ENCODE measurements at regions of chr1 and their contacts with region 1.

Region 1: DNA sequence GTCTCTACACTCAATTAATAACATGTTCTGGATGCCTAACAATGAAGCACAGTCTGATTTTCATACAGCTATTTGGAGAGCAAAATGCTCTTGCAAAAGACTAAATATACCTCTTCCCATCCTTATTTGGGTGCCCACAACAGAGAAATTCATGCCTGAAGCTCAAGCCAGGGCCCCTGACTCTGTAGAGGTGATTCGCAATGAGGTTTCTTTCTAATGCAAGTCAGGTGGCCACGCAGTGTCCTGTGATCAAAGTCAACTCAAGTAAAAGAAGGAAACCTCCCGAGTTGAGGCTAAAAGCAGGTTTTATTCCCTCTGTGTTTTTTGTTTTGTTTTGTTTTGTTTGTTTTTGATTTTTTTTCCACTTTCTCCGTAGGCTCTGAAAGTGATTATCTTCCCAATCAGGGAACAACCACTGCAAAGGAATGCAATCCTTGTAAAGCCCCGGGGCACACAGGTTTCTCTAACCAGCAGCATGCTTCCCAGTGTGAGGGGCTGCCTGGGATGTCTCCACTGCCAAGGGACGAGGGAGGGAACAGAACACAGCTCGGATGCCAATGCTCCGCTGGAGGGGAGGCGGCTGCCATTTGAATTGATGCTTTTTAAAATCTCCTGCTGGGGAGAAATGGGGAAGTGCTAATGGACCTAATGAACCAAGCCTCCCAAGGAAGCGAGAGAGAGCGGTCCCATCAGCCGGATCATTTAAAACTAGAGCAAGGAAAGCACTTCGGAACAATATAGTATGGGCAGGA is 73.8 kb upstream of the SSX2IP start:
- DNase-seq: no peak
- H3K4me3 ChIP-seq: no peak overlapping the region
- H3K27ac ChIP-seq: no peak overlapping the region
- H3K4me1 ChIP-seq: no peaks in the 10 kb centered on the region
- H3K27me3 ChIP-seq: peaks cover 29 to 30% of the 10 kb centered on the region in 2 experiments
- CTCF ChIP-seq: no peak
- POLR2A ChIP-seq: no peak

Region 2: GRCh38 chr1:84753516-84754385 is 10.3 kb before region 1 on chr1:
- CTCF ChIA-PET with region 1: interaction called, 10 read pairs
- POLR2A ChIA-PET with region 1: no interaction called
- dilution Hi-C with region 1: no loop called
- intact Hi-C with region 1: no loop called
- DNase-seq: peak; percentile 71
- H3K4me3 ChIP-seq: no peak overlapping the region
- H3K27ac ChIP-seq: no peak overlapping the region
- H3K4me1 ChIP-seq: no peaks in the 10 kb centered on the region
- H3K27me3 ChIP-seq: peaks cover 8 to 12% of the 10 kb centered on the region in 2 experiments
- CTCF ChIP-seq: peak; percentile 90 to 93
- POLR2A ChIP-seq: no peak